Vagina (tissue), 2 donors: ENCODE measurements at regions of chr2 and their contacts with region 1.

Region 1: GRCh38 chr2:66587216-66587615 is 152.3 kb downstream of the MEIS1 start:
- DNase-seq: no peak
- H3K4me3 ChIP-seq: no peak overlapping the region
- H3K27ac ChIP-seq: peak overlapping the region; percentile 31
- H3K4me1 ChIP-seq: no peaks in the 10 kb centered on the region
- H3K27me3 ChIP-seq: no peaks in the 10 kb centered on the region
- CTCF ChIP-seq: no peak
- POLR2A ChIP-seq: no peak

Region 2: GRCh38 chr2:66305718-66306117 is 281.5 kb before region 1 on chr2:
- intact Hi-C with region 1: loop called (anchors 10 kb)
- DNase-seq: no peak
- H3K4me3 ChIP-seq: no peak overlapping the region
- H3K27ac ChIP-seq: no peak overlapping the region
- H3K4me1 ChIP-seq: peaks cover 14% of the 10 kb centered on the region
- H3K27me3 ChIP-seq: no peaks in the 10 kb centered on the region
- CTCF ChIP-seq: no peak
- POLR2A ChIP-seq: no peak

Region 3: GRCh38 chr2:66389651-66390131 is 197.5 kb before region 1 on chr2:
- intact Hi-C with region 1: no loop called
- DNase-seq: no peak
- H3K4me3 ChIP-seq: no peak overlapping the region
- H3K27ac ChIP-seq: peak overlapping the region; percentile 68
- H3K4me1 ChIP-seq: peaks cover 39% of the 10 kb centered on the region
- H3K27me3 ChIP-seq: no peaks in the 10 kb centered on the region
- CTCF ChIP-seq: no peak
- POLR2A ChIP-seq: no peak